ENCODE measurements at regions of chr5 and their contacts with region 1.

Region 1: GRCh38 chr5:67209142-67209771 is 12.7 kb upstream of the CD180 start:
- DNase-seq: no peak
- ATAC-seq: peak; percentile 43
- H3K4me3 Mint-ChIP-seq: no peak overlapping the region
- H3K27ac Mint-ChIP-seq: peak overlapping the region; percentile 85
- H3K4me1 Mint-ChIP-seq: peaks cover 69% of the 10 kb centered on the region
- H3K27me3 Mint-ChIP-seq: no peaks in the 10 kb centered on the region
- CTCF ChIP-seq: no peak

Region 2: GRCh38 chr5:66306105-66306843 is 903.0 kb before region 1 on chr5:
- CTCF ChIA-PET with region 1: interaction called, 3 read pairs
- POLR2A ChIA-PET with region 1: no interaction called
- intact Hi-C with region 1: loop called (anchors 2 kb)
- DNase-seq: no peak
- ATAC-seq: peak; percentile 65
- H3K4me3 Mint-ChIP-seq: no peak overlapping the region
- H3K27ac Mint-ChIP-seq: no peak overlapping the region
- H3K4me1 Mint-ChIP-seq: no peaks in the 10 kb centered on the region
- H3K27me3 Mint-ChIP-seq: peaks cover 15% of the 10 kb centered on the region
- CTCF ChIP-seq: no peak

Region 3: DNA sequence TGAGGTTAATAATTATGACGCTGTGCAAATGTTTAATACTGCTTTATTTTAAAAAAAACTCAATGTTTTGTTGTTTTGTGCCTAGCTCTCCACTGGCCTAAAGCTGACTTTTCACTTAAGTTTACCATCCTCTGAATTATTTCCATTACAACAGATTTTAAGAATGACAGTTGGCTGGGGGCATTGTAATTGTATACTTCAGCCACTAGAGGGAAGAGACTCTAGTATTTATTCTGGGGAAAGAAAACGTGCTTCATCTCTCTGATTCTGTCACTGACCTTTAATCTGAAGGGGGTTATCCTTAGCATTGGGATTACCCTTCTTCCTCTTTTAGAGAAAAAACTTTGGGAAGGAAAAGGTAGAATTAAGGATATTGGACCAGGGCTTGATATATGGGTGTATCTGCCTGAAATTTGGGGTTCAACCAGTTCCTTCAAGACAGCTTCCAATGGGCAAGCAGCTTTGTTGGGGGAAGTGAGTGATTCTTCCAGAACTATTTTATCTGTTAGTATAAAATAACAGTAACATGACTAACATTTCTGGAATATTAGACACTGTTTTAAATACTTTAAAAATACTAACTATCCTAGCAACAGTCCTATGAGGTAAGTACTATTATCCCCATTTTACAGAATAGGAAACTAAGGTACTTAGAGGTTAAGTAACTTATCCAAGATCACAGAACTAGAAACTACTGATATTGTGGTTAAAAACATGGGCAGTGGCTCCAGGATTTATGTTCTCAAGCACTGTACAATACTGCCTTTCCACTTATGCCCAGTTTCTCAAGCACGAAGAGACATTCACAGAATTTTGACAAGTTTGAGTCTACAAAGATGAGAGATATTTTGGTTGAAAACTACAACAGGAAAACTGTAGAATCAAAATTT is 221.1 kb before region 1 on chr5:
- CTCF ChIA-PET with region 1: interaction called, 9 read pairs
- POLR2A ChIA-PET with region 1: no interaction called
- intact Hi-C with region 1: loop called (anchors 1 kb)
- DNase-seq: no peak
- ATAC-seq: peak; percentile 70
- H3K4me3 Mint-ChIP-seq: no peak overlapping the region
- H3K27ac Mint-ChIP-seq: no peak overlapping the region
- H3K4me1 Mint-ChIP-seq: peaks cover 6% of the 10 kb centered on the region
- H3K27me3 Mint-ChIP-seq: no peaks in the 10 kb centered on the region
- CTCF ChIP-seq: peak; percentile 57

Region 4: DNA sequence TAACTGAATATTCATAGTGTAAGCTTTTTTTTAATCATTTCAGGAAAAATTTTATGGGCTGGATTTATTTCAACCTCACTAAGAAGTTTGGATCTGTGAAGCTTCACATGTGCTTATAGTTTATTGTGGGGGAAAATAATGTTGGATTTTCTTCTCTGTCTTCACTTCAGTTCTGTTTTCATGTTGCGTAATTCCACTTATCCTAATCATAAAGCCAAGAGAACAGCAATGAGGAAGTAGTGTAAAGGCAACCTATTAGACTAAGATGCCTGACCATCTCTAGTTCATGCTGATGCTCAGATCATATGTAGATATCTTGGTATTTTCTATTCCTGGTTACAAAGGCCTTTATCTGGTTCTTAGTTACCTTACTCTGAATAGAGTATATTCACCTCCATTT is 62.7 kb before region 1 on chr5:
- CTCF ChIA-PET with region 1: no interaction called
- POLR2A ChIA-PET with region 1: no interaction called
- intact Hi-C with region 1: no loop called
- DNase-seq: no peak
- ATAC-seq: no peak
- H3K4me3 Mint-ChIP-seq: no peak overlapping the region
- H3K27ac Mint-ChIP-seq: no peak overlapping the region
- H3K4me1 Mint-ChIP-seq: no peaks in the 10 kb centered on the region
- H3K27me3 Mint-ChIP-seq: no peaks in the 10 kb centered on the region
- CTCF ChIP-seq: no peak

Region 5: GRCh38 chr5:67165526-67166459 is 43.5 kb before region 1 on chr5:
- CTCF ChIA-PET with region 1: interaction called, 164 read pairs
- POLR2A ChIA-PET with region 1: interaction called, 214 read pairs
- intact Hi-C with region 1: loop called (anchors 1 kb)
- DNase-seq: peak; percentile 67
- ATAC-seq: peak; percentile 86
- H3K4me3 Mint-ChIP-seq: peak overlapping the region; percentile 86
- H3K27ac Mint-ChIP-seq: peak overlapping the region; percentile 95
- H3K4me1 Mint-ChIP-seq: peaks cover 26% of the 10 kb centered on the region
- H3K27me3 Mint-ChIP-seq: no peaks in the 10 kb centered on the region
- CTCF ChIP-seq: no peak

Region 6: GRCh38 chr5:67221487-67222242 is 12.4 kb after region 1 on chr5:
- CTCF ChIA-PET with region 1: interaction called, 5 read pairs
- POLR2A ChIA-PET with region 1: interaction called, 18 read pairs
- intact Hi-C with region 1: loop called (anchors 1 kb)
- DNase-seq: no peak
- ATAC-seq: peak; percentile 75
- H3K4me3 Mint-ChIP-seq: peak overlapping the region; percentile 78
- H3K27ac Mint-ChIP-seq: peak overlapping the region; percentile 97
- H3K4me1 Mint-ChIP-seq: peaks cover 65% of the 10 kb centered on the region
- H3K27me3 Mint-ChIP-seq: no peaks in the 10 kb centered on the region
- CTCF ChIP-seq: no peak

Measured in activated B cell treated with CpG ODN at 0.5 μM for 24 hours (primary cell).